Endothelial cell of umbilical vein (primary cell): ENCODE measurements at regions of chr2 and their contacts with region 1.

Region 1: GRCh38 chr2:29309090-29310029 is 194.1 kb downstream of the CLIP4 start:
- DNase-seq: peak; percentile 27
- H3K4me3 ChIP-seq: no peak overlapping the region
- H3K27ac ChIP-seq: no peak overlapping the region
- H3K4me1 ChIP-seq: no peaks in the 10 kb centered on the region
- H3K27me3 ChIP-seq: no peaks in the 10 kb centered on the region
- CTCF ChIP-seq: peak; percentile 56 to 73
- POLR2A ChIP-seq: no peak

Region 2: DNA sequence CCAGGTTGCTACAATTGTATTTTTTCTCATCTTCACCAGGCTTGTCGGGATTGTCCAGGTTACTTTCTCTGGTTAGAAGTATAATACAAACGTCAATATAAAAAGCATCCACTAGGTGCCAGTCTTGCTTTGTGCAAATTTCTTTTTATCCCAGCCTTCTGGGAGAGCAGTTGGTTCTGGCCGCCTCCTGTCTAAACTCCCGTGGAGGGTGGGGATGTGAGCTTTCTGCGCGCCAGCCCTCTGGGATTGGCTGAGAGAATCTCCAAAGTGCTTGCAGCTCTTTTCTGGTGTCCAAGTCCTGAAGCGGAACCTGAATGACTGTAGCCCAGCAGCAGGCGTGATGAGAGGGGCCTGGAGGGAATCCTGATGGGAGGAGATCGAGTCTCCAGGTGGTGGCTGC is 350.7 kb before region 1 on chr2:
- CTCF ChIA-PET with region 1: interaction called, 12 read pairs
- POLR2A ChIA-PET with region 1: no interaction called
- dilution Hi-C with region 1: no loop called
- intact Hi-C with region 1: loop called (anchors 1 kb)
- DNase-seq: peak; percentile 66
- H3K4me3 ChIP-seq: no peak overlapping the region
- H3K27ac ChIP-seq: no peak overlapping the region
- H3K4me1 ChIP-seq: peaks cover 7% of the 10 kb centered on the region
- H3K27me3 ChIP-seq: no peaks in the 10 kb centered on the region
- CTCF ChIP-seq: peak; percentile 38 to 58
- POLR2A ChIP-seq: no peak

Region 3: GRCh38 chr2:29260151-29260772 is 49.1 kb before region 1 on chr2:
- CTCF ChIA-PET with region 1: interaction called, 18 read pairs
- POLR2A ChIA-PET with region 1: no interaction called
- dilution Hi-C with region 1: no loop called
- intact Hi-C with region 1: no loop called
- DNase-seq: peak; percentile 80
- H3K4me3 ChIP-seq: no peak overlapping the region
- H3K27ac ChIP-seq: peak overlapping the region; percentile 63
- H3K4me1 ChIP-seq: peaks cover 20% of the 10 kb centered on the region
- H3K27me3 ChIP-seq: peaks cover 2 to 6% of the 10 kb centered on the region in 2 experiments
- CTCF ChIP-seq: no peak
- POLR2A ChIP-seq: no peak

Region 4: DNA sequence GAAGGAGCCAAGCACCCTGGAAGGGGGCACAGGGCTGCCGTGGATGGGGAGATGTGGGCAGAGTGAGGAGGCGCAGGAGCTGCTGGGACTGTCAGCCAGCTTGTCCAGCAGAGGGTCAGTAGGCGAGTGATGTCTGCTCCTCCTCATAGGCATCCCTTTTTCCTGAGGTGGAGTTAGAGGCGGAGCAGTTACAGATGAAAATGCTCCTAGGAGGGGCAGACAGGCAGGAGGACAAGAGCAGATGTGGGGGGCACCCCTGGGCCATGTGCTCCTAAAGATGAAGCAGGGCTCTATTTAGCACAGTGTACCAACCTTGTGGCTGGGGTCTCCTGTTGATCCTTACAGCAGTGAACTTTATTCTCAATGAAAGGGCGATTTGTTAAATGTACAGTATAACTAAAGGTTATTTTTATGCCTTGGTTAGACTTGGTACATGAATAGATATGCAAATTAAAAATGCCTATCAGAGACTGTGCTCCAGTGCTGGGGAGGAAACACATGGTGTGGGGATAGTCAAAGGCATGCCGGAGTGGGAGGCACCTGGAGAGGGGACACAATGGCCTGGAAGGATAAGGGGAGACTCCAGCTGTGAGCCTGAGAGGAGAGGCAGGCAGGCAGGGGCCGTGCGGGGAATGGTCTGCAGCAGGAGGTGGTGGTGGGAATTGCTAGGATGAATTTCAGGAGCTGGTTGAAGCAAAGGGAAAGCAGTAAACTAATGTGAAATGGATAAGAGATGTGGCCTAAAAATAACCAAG is 18.9 kb before region 1 on chr2:
- CTCF ChIA-PET with region 1: interaction called, 16 read pairs
- POLR2A ChIA-PET with region 1: no interaction called
- dilution Hi-C with region 1: no loop called
- intact Hi-C with region 1: no loop called
- DNase-seq: no peak
- H3K4me3 ChIP-seq: no peak overlapping the region
- H3K27ac ChIP-seq: no peak overlapping the region
- H3K4me1 ChIP-seq: no peaks in the 10 kb centered on the region
- H3K27me3 ChIP-seq: no peaks in the 10 kb centered on the region
- CTCF ChIP-seq: no peak
- POLR2A ChIP-seq: no peak

Region 5: DNA sequence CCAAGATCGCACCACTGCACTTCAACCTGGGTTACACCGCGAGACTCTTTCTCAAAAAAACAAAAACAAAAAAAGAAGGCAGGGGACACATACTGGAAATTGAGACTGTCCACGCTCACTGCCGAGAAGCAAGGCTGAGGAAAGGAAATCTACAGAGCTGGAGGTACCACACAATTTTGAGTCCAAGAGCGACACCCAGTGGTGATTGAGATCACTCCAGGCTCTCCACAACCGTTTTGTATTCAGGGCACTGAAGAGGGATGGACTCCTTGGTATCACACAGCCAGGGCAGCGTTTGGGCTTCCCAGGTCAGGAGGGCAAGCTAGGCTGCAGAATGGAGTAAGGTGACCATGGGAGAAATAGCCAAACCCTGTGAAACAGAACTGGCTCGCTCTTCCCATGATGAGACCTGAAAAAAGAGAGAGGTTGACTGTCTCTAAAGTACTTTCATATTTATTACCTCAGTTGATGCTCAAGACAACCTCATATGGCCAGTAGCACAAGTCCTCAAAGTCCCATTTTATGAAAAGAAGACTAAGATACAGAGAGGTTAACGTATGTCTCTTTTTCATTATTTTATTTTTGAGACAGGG is 763.0 kb after region 1 on chr2:
- CTCF ChIA-PET with region 1: interaction called, 11 read pairs
- POLR2A ChIA-PET with region 1: no interaction called
- dilution Hi-C with region 1: no loop called
- intact Hi-C with region 1: no loop called
- DNase-seq: peak; percentile 57
- H3K4me3 ChIP-seq: no peak overlapping the region
- H3K27ac ChIP-seq: no peak overlapping the region
- H3K4me1 ChIP-seq: no peaks in the 10 kb centered on the region
- H3K27me3 ChIP-seq: no peaks in the 10 kb centered on the region
- CTCF ChIP-seq: peak; percentile 50 to 75
- POLR2A ChIP-seq: no peak